ENCODE measurements at regions of chr15 and their contacts with region 1.

Region 1: DNA sequence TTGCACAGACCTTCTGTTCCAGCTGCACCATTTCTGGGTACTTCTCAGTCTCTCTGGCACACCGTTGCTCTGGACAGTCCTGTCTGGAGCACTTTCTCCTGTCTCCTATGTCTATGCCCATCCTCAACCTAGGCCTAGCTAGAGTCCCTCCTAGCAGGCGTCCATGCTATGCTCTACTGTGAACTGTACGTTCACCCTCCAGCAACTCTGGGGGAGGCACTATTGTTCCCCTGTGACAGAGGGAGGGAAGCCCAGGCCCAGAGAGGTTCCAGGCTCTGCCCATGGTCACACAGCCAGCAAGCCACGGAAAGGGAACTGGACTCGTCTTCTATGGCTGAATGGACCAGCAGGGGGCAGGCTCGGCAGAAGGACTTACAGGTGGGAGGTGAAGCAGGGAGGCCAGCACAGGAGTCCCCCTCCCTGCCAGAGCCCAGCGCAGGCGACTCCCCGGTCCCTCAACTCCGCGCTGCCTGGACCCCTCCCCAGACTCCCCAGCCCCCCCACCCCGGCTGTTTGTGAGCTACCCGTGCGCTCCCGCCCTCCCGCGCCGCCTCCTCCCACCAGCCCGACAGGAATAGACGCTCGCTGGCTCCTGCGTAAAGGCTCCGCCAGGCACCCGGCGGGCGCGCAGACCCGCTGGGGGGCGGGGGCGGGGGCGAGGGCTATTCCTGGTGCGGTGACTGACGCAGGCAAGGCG is 1.7 kb upstream of the LINGO1 start:
- DNase-seq: peak; percentile 88
- H3K4me3 Mint-ChIP-seq: peak overlapping the region; percentile 44
- H3K27ac Mint-ChIP-seq: no peak overlapping the region
- H3K4me1 Mint-ChIP-seq: peaks cover 7% of the 10 kb centered on the region
- H3K27me3 Mint-ChIP-seq: peaks cover 45% of the 10 kb centered on the region

Region 2: DNA sequence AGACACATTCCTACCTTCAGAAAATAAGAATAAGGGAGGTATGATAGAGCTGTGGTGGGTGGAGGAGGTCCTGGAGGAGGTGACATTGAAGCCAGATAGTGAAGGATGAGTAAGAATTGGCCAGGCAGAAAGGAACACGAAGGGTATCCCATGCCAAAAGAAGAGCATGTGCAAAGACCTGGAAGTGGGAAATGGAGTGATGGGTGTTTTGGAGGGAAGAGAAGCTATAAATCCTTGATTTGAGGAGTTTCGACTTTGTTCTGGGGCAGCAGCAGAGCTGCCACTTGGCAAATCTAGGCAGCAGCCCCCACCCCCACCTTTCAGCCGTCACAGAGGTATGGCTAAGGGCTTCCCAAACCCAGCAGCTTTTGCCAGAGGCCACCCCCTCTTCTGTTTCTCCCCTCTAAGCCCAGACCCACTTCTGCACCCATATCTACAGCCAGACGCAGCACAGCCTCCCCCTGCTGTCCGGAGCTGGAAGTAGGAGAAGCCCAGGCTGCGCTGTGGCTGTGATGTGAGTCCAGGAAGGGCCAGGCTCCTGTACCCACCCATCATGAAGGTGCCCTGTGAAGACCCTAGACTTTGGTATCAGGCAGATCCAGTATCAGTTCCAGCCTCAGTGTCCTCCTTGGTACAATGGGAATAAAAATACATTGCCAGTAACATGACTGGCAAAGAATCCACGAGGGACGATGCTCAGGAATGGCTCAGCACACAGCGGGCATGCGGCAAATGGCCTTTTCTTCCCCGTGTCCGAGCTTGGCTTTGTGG is 187.0 kb after region 1 on chr15:
- intact Hi-C with region 1: loop called (anchors 1 kb)
- DNase-seq: peak; percentile 76
- H3K4me3 Mint-ChIP-seq: no peak overlapping the region
- H3K27ac Mint-ChIP-seq: no peak overlapping the region
- H3K4me1 Mint-ChIP-seq: no peaks in the 10 kb centered on the region
- H3K27me3 Mint-ChIP-seq: peaks cover 41% of the 10 kb centered on the region

Measured in activated CD4-positive, alpha-beta T cell treated with anti-CD3 and anti-CD28 coated beads, Interleukin-2, amount 10 ng/mL, durations not matched to agents 24 days and 14 days (primary cell).